Natural killer cell (primary cell): ENCODE measurements at regions of chr11 and their contacts with region 1.

Region 1: DNA sequence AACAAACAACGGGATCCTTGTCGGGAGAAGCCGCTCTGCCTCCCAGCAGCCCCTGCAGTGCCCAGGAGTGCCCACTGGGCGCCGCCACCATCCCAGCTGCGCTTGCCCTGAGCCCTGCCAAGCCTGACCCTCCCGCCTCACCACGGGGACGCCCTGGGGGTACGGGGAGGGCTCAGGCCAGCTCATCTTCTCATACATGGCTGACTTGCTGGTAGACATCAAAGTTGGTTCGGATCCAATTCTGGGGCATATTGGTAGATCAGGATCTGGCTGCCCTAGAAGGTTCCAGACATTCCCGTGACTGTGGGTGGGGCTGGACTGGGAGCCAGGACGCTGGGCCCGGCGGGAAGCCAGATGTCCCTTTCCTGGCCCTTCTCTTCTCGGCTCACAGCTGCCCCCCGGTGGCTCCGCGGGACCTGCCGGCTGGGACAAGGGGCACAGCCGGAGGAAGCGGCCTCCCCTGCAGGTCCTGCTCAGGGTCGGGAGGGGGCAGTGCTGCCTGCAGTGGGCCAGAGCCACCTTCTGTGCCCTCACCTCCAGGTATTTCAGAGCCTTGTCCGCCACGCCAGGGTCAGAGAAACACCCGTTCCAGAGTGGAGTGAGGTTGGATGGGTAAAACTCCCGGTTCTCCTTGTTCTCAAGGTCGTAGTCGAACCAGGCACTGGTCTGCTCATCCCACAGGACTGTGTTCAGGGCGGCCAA is 10.6 kb upstream of the TREH start:
- DNase-seq: peak; percentile 80 to 93
- ATAC-seq: peak; percentile 82 to 93 (median 86)
- H3K4me3 ChIP-seq: peak overlapping the region; percentile 27
- H3K4me3 Mint-ChIP-seq: peak overlapping the region; percentile 83
- H3K27ac ChIP-seq: no peak overlapping the region
- H3K27ac Mint-ChIP-seq: peak overlapping the region; percentile 57 to 82
- H3K4me1 ChIP-seq: peaks cover 56% of the 10 kb centered on the region
- H3K4me1 Mint-ChIP-seq: peaks cover 34 to 57% of the 10 kb centered on the region in 2 donors
- H3K27me3 ChIP-seq: no peaks in the 10 kb centered on the region
- H3K27me3 Mint-ChIP-seq: peaks cover 7% of the 10 kb centered on the region in 2 donors
- CTCF ChIP-seq: peak; percentile 98

Region 2: GRCh38 chr11:118705111-118705741 is 15.2 kb after region 1 on chr11:
- intact Hi-C with region 1: loop called (anchors 2 kb)
- DNase-seq: peak; percentile 37 to 78
- ATAC-seq: peak; percentile 55 to 76 (median 60)
- H3K4me3 ChIP-seq: no peak overlapping the region
- H3K4me3 Mint-ChIP-seq: peak overlapping the region; percentile 49
- H3K27ac ChIP-seq: no peak overlapping the region
- H3K27ac Mint-ChIP-seq: peak overlapping the region; percentile 64 to 86
- H3K4me1 ChIP-seq: peaks cover 35% of the 10 kb centered on the region
- H3K4me1 Mint-ChIP-seq: peaks cover 16 to 25% of the 10 kb centered on the region in 2 donors
- H3K27me3 ChIP-seq: no peaks in the 10 kb centered on the region
- H3K27me3 Mint-ChIP-seq: peaks cover 0 to 2% of the 10 kb centered on the region in 2 donors
- CTCF ChIP-seq: no peak

Region 3: DNA sequence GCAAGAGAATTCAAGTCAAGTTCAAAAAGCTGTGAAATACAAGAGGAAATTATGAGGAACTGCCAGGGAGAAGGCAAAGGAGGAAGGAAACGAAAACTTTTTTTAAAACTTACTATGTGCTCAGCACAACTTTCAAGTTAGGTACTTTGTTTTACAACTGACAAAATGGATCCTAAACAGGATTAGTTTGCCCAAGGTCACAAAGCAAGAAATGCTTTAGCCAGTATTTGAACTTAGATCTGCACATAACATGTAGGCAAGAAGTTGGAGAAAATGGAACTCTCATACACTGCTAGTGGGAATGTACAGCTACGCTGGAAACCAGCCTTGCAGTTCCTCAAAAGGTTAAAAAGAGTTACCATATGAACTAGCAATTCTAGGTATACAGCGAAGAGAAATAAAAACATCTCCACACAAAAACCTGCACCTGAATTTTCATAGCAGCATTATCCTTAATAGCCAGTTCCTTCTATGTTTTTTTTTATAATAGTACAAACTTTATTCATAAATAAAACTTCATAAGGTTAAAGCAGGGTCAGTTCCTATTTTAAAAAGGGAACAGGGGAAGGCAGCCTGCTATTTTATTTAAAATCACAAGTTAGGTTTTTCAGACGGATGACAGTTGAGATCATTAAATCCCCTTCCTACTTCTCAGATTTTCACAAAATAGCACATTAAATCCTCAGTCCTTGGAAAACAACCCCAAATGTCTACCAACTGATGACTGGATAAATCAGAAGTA is 81.7 kb after region 1 on chr11:
- intact Hi-C with region 1: loop called (anchors 5 kb)
- DNase-seq: no peak
- ATAC-seq: no peak
- H3K4me3 ChIP-seq: no peak overlapping the region
- H3K4me3 Mint-ChIP-seq: peak overlapping the region; percentile 53
- H3K27ac ChIP-seq: peak overlapping the region; percentile 28
- H3K27ac Mint-ChIP-seq: peak overlapping the region; percentile 64
- H3K4me1 ChIP-seq: peaks cover 25% of the 10 kb centered on the region
- H3K4me1 Mint-ChIP-seq: peaks cover 78 to 84% of the 10 kb centered on the region in 2 donors
- H3K27me3 ChIP-seq: no peaks in the 10 kb centered on the region
- H3K27me3 Mint-ChIP-seq: no peaks in the 10 kb centered on the region
- CTCF ChIP-seq: no peak

Region 4: GRCh38 chr11:118870396-118871345 is 180.7 kb after region 1 on chr11:
- intact Hi-C with region 1: loop called (anchors 2 kb)
- DNase-seq: peak in 1 of 2 donors; percentile 68
- ATAC-seq: peak; percentile 27 to 55 (median 36)
- H3K4me3 ChIP-seq: peak overlapping the region; percentile 37
- H3K4me3 Mint-ChIP-seq: peak overlapping the region; percentile 88
- H3K27ac ChIP-seq: peak overlapping the region; percentile 98
- H3K27ac Mint-ChIP-seq: peak overlapping the region; percentile 94 to 99
- H3K4me1 ChIP-seq: peaks cover 62% of the 10 kb centered on the region
- H3K4me1 Mint-ChIP-seq: peaks cover 35 to 45% of the 10 kb centered on the region in 2 donors
- H3K27me3 ChIP-seq: no peaks in the 10 kb centered on the region
- H3K27me3 Mint-ChIP-seq: no peaks in the 10 kb centered on the region
- CTCF ChIP-seq: no peak

Region 5: DNA sequence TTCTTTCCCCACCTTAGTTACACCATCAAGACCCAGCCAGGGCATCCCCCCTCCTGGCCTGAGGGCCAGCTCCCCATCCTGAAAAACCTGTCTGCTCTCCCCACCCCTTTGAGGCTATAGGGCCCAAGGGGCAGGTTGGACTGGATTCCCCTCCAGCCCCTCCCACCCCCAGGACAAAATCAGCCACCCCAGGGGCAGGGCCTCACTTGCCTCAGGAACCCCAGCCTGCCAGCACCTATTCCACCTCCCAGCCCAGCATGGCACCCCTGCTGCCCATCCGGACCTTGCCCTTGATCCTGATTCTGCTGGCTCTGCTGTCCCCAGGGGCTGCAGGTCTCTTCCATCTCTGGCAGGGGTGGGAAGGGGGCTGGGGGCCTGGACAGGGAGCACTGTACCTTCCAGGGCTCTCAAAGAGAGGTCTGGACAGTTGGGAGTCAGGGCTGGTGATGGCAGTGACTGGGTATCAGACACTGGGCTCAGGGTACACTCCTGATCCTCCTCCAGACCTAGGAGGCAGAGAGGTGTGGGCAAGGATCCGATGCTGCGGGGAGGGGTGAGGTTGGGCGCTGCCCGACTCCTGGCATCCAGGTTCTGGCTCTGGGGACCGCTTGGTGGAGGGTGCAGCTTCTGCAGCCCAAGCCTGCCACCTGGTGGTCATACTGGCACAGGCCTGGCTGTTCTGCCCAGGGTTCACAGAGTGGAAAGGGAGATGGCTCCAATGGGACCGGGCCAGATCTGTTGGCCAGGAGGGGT is 266.3 kb after region 1 on chr11 and contains the start of gene UPK2:
- intact Hi-C with region 1: loop called (anchors 1 kb)
- DNase-seq: peak; percentile 88 to 94
- ATAC-seq: peak; percentile 92 to 100 (median 99)
- H3K4me3 ChIP-seq: no peak within 1 kb of the TSS
- H3K4me3 Mint-ChIP-seq: no peak within 1 kb of the TSS
- H3K27ac ChIP-seq: no peak within 1 kb of the TSS
- H3K27ac Mint-ChIP-seq: no peak within 1 kb of the TSS
- H3K4me1 ChIP-seq: peaks cover 3% of the 10 kb centered on the region
- H3K4me1 Mint-ChIP-seq: peaks cover 0 to 9% of the 10 kb centered on the region in 2 donors
- H3K27me3 ChIP-seq: no peaks in the 10 kb centered on the region
- H3K27me3 Mint-ChIP-seq: peaks cover 4 to 18% of the 10 kb centered on the region in 2 donors
- CTCF ChIP-seq: peak; percentile 90
- total RNA-seq, gene UPK2: 0.40 to 0.41 TPM in 2 of 3 donors, not detected in the other